ENCODE measurements at regions of chr15 and their contacts with region 1.

Region 1: GRCh38 chr15:99068186-99068585 is 36.7 kb upstream of the SYNM start:
- DNase-seq: no peak

Region 2: DNA sequence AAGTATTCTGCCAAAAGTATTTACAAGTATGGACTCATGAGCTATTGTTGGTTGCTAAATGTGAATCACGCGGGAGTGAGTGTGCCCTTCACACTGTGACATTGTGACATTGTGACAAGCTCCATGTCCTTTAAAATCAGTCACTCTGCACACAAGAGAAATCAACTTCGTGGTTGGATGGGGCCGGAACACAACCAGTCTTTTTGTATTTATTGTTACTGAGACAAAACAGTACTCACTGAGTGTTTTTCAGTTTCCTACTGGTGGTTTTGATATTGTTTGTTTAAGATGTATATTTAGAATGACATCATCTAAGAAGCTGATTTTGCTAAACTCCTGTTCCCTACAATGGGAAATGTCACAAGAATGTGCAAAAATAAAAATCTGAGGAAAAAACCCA is 67.0 kb after region 1 on chr15:
- intact Hi-C with region 1: loop called in 1 of 2 experiments (anchors 2 kb)
- DNase-seq: no peak

Region 3: GRCh38 chr15:99733268-99734039 is 665.3 kb after region 1 on chr15 and contains the start of gene LYSMD4:
- intact Hi-C with region 1: no loop called
- DNase-seq: peak; percentile 99
- total RNA-seq, gene LYSMD4: 6.8 to 7.5 TPM

Measured in posterior vena cava (tissue), 2 donors.